Left colon (tissue), 2 donors: ENCODE measurements at regions of chr5 and their contacts with region 1.

Region 1: DNA sequence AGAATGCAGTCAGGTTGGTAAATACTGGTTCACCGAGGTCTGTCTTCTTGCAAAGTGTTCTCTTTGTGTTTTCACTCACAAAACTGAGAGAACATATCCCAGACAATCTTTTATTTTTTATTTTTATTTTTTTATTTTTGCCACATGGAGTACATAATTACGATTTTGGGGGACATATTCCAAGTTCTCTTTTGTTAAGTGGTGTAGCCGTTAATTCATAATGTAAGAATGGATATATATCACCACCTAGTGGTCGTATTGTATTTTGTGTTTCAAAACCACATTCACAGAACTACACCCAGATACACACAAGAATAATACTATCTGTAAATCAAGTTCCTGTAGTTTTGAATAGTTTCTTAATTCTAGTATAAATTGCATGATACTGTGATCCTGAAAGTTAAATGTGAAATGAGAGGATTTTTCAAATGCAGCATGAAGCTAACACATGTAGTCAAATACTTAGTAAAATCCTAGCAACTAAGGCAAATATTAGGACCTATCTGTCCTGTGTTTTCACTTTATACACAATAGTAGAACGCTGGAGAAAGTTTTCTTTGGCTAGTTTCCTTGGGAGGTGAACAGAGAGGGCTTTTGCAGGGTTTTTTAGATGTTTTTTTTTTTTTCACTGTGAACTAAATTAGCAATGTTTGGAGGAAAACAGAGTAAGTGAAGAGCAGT is 92.7 kb downstream of the VCAN start:
- DNase-seq: no peak
- ATAC-seq: no peak

Region 2: GRCh38 chr5:82641331-82642003 is 922.7 kb before region 1 on chr5:
- intact Hi-C with region 1: loop called in 1 of 2 experiments (anchors 10 kb)
- DNase-seq: peak; percentile 62 to 64
- ATAC-seq: peak; percentile 93